H1 (cell line): ENCODE measurements at regions of chr6 and their contacts with region 1.

Region 1: DNA sequence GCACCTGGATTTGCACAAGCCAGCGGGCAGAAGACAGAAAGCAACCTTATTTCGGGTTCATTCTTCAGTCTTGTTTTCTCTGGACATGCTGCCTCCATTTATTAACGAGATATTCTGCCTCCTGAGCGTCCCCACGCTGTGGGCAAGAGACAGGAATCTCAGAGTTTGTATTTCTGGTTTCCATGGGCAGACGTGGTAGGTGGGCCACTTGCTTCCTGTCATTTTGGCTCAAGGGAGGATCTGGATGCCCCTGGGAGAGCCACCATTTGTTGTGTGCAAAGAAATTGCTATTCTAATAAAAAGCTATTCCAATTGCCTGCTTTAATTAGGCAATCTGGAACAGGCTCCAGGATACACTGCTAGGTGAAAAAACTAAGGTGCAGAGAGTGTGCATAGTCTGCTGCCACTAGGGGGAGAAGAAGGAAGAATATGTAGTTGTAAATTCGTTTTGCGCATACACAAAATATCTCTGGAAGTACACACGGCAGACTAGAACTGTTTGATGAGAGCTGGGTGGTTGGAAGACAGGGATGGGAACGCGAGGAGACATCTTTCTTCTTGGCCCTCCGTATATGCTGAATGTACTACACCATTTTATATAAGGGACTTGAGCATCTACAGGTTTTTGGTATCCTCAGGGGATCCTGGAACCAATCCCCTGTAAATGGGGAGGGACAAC is 30.1 kb upstream of the SLC16A10 start:
- DNase-seq: no peak
- H3K4me3 ChIP-seq: no peak overlapping the region
- H3K27ac ChIP-seq: no peak overlapping the region
- H3K4me1 ChIP-seq: no peaks in the 10 kb centered on the region; a peak in 1 of 7 replicates
- H3K27me3 ChIP-seq: no peaks in the 10 kb centered on the region
- CTCF ChIP-seq: peak in 2 of 3 experiments; percentile 41 to 83; a peak in 3 of 4 replicates
- EP300 ChIP-seq: no peak
- POLR2A ChIP-seq: no peak
- RAD21 ChIP-seq: peak; percentile 46 to 54

Region 2: DNA sequence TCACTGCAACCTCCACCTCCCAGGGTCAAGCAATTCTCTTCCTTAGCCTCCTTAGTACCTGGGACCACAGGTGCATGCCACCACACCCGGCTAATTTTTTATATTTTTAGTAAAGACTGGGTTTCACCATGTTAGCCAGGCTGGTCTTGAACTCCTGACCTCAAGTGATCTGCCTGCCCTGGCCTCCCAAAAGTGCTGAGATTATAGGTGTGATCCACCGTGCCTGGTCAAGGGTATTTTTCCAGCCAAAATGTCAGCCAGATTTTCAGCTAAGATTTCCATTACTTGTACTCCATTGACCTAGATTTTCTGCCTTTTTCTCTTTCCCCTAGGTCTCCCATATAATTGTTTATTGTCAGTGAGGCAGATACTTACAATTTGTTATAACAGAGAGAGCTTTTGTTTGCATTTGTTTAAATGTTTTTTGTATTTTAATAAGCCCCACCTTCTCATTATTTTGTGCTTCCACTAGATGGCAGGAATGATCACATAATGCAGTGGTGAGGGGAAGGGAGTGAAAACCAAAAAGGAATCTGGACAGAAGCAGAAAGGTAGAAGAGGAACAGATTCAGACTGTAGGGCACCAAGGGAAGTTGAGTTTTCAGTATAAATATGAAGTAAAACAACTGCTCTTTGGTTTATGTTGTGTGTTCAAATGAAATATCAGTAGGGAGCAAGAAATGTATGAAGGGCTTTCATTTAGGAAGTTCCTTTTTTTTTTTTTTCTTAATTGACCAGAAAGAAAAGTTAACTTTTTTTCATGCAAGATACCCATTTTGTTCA is 45.7 kb before region 1 on chr6:
- CTCF ChIA-PET with region 1: interaction called, 12 read pairs
- POLR2A ChIA-PET with region 1: no interaction called
- DNase-seq: no peak
- H3K4me3 ChIP-seq: no peak overlapping the region
- H3K27ac ChIP-seq: no peak overlapping the region
- H3K4me1 ChIP-seq: no peaks in the 10 kb centered on the region
- H3K27me3 ChIP-seq: no peaks in the 10 kb centered on the region
- CTCF ChIP-seq: peak in 2 of 3 experiments; percentile 54 to 62; a peak in 3 of 4 replicates
- EP300 ChIP-seq: no peak
- POLR2A ChIP-seq: no peak
- RAD21 ChIP-seq: peak; percentile 83 to 86

Region 3: GRCh38 chr6:111030008-111031007 is 26.9 kb before region 1 on chr6:
- CTCF ChIA-PET with region 1: interaction called, 27 read pairs
- POLR2A ChIA-PET with region 1: interaction called, 3 read pairs
- DNase-seq: no peak
- H3K4me3 ChIP-seq: no peak overlapping the region
- H3K27ac ChIP-seq: no peak overlapping the region
- H3K4me1 ChIP-seq: peaks cover 3 to 15% (median 8%) of the 10 kb centered on the region in 4 experiments; a peak in 6 of 7 replicates
- H3K27me3 ChIP-seq: no peaks in the 10 kb centered on the region
- CTCF ChIP-seq: no peak
- EP300 ChIP-seq: no peak
- POLR2A ChIP-seq: no peak
- RAD21 ChIP-seq: no peak

Region 4: DNA sequence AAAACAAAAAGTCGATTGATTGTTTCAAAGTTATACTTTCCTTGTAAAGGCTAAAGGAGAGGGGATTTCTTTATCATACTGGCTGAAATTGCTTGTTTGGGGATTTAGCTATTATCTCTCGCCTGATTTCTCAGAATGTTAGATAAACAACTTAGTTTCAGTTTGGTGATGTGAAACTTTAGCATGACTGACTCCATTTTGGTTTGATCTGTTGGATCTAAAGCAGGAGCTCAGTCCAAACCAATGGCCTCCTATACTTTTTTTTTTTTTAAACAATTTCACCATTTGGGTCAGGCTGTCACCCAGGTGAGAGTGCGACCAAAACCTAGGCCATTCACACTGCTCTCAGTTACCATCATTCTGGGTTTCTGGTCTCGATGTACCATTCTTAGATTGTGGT is 15.3 kb before region 1 on chr6:
- CTCF ChIA-PET with region 1: interaction called, 16 read pairs
- POLR2A ChIA-PET with region 1: no interaction called
- DNase-seq: no peak
- H3K4me3 ChIP-seq: no peak overlapping the region
- H3K27ac ChIP-seq: no peak overlapping the region
- H3K4me1 ChIP-seq: no peaks in the 10 kb centered on the region
- H3K27me3 ChIP-seq: no peaks in the 10 kb centered on the region; a peak in 2 of 7 replicates
- CTCF ChIP-seq: no peak
- EP300 ChIP-seq: no peak
- POLR2A ChIP-seq: no peak
- RAD21 ChIP-seq: no peak

Region 5: GRCh38 chr6:111068510-111069205 is 11.4 kb after region 1 on chr6:
- CTCF ChIA-PET with region 1: interaction called, 31 read pairs
- POLR2A ChIA-PET with region 1: interaction called, 4 read pairs
- DNase-seq: no peak
- H3K4me3 ChIP-seq: no peak overlapping the region
- H3K27ac ChIP-seq: no peak overlapping the region
- H3K4me1 ChIP-seq: no peaks in the 10 kb centered on the region
- H3K27me3 ChIP-seq: no peaks in the 10 kb centered on the region
- CTCF ChIP-seq: no peak
- EP300 ChIP-seq: no peak
- POLR2A ChIP-seq: no peak
- RAD21 ChIP-seq: no peak

Region 6: DNA sequence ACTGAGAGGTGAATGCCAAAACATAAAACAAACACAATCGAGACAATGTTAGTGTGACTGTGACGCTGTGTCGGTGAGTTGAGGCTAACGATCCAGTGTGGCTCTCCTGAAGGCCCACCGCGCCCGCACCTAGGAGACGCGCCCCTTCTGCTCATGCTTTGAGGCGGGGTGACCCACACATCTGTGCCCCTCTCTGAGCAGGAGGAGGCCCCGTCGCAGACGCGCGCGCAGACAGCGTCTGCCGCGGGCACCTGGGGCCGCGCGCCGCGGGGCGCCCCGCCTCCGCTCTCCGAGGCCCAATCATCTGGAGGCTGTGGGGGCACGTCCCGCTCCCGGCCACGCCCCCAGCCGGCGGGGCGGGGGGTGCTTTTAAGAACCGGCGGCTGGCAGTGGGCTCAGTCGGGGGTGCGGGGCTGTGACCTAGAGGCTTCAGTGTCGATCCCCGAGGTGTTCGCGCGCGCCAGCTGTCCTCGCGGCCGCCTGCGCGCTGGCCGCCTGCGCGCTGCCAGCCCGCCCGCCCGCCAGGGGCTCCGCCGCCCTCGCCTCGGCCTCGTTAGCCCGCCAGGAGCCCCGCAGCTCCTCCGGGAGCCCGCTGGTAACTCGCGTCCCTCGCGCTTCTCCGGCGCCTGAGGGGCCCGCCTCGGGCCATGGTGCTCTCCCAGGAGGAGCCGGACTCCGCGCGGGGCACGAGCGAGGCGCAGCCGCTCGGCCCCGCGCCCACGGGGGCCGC is 30.1 kb after region 1 on chr6 and contains the start of gene SLC16A10:
- CTCF ChIA-PET with region 1: no interaction called
- POLR2A ChIA-PET with region 1: no interaction called
- DNase-seq: peak; percentile 61 to 87
- H3K4me3 ChIP-seq: peak within 1 kb of the TSS; percentile 77 to 94 (median 84)
- H3K27ac ChIP-seq: no peak within 1 kb of the TSS; the same call in 1 of the 2 replicates
- H3K4me1 ChIP-seq: peaks cover 2 to 17% (median 10%) of the 10 kb centered on the region in 4 experiments; a peak in 4 of 7 replicates
- H3K27me3 ChIP-seq: peaks cover 0 to 13% (median 5%) of the 10 kb centered on the region in 4 experiments; a peak in 6 of 7 replicates
- CTCF ChIP-seq: no peak
- EP300 ChIP-seq: no peak
- POLR2A ChIP-seq: peak; percentile 64 to 86; a peak in 2 of 3 replicates
- RAD21 ChIP-seq: no peak
- total RNA-seq, gene SLC16A10: 16.9 and 18.6 TPM in 2 replicates

Region 7: GRCh38 chr6:111183702-111184517 is 126.7 kb after region 1 on chr6:
- CTCF ChIA-PET with region 1: interaction called, 12 read pairs
- POLR2A ChIA-PET with region 1: no interaction called
- DNase-seq: no peak
- H3K4me3 ChIP-seq: no peak overlapping the region
- H3K27ac ChIP-seq: no peak overlapping the region
- H3K4me1 ChIP-seq: no peaks in the 10 kb centered on the region
- H3K27me3 ChIP-seq: no peaks in the 10 kb centered on the region
- CTCF ChIP-seq: no peak
- EP300 ChIP-seq: no peak
- POLR2A ChIP-seq: no peak
- RAD21 ChIP-seq: no peak

Region 8: GRCh38 chr6:111210194-111210728 is 153.0 kb after region 1 on chr6:
- CTCF ChIA-PET with region 1: interaction called, 18 read pairs
- POLR2A ChIA-PET with region 1: no interaction called
- DNase-seq: peak in 1 of 2 experiments; percentile 49
- H3K4me3 ChIP-seq: no peak overlapping the region
- H3K27ac ChIP-seq: no peak overlapping the region
- H3K4me1 ChIP-seq: peaks cover 0 to 3% (median 1%) of the 10 kb centered on the region in 4 experiments; a peak in 2 of 7 replicates
- H3K27me3 ChIP-seq: no peaks in the 10 kb centered on the region
- CTCF ChIP-seq: peak in 2 of 3 experiments; percentile 52 to 73; a peak in 3 of 4 replicates
- EP300 ChIP-seq: no peak
- POLR2A ChIP-seq: no peak
- RAD21 ChIP-seq: peak; percentile 80 to 82